Right ventricle myocardium inferior (tissue), 1 donor: ENCODE measurements at regions of chr5 and their contacts with region 1.

Region 1: GRCh38 chr5:149317281-149318048 is 27.8 kb upstream of the GRPEL2 start:
- DNase-seq: no peak
- ATAC-seq: no peak

Region 2: GRCh38 chr5:149367249-149367971 is 49.9 kb after region 1 on chr5:
- intact Hi-C with region 1: loop called (anchors 5 kb)
- DNase-seq: no peak
- ATAC-seq: peak; percentile 48

Region 3: GRCh38 chr5:149485655-149486425 is 168.4 kb after region 1 on chr5:
- intact Hi-C with region 1: no loop called
- DNase-seq: no peak
- ATAC-seq: peak; percentile 87

Region 4: DNA sequence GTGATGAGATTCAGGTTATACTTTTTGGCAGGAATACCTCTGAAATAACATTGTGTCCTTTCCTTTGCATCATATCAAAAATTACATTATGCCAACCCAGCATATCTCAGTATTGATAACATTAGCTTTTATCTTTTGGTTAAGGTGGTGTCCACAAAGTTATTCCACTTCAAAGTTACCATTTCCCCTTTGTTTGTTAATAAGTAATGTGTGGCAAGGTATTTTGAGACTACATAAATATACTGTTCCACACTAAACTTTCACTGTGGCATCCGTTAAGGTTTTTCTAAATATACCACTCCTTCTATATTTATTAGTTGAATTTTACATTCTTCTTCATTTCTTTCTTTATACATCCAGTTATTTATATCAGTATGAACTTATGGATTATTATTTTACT is 249.8 kb after region 1 on chr5:
- intact Hi-C with region 1: loop called (anchors 5 kb)
- DNase-seq: no peak
- ATAC-seq: no peak